MCF 10A (cell line): ENCODE measurements at regions of chr2 and their contacts with region 1.

Region 1: GRCh38 chr2:62505750-62506420 is at the start of gene TMEM17:
- DNase-seq: peak; percentile 88
- H3K4me3 Mint-ChIP-seq: peak within 1 kb of the TSS; percentile 79
- H3K27ac Mint-ChIP-seq: peak within 1 kb of the TSS; percentile 88
- H3K4me1 Mint-ChIP-seq: peaks cover 23% of the 10 kb centered on the region
- H3K27me3 Mint-ChIP-seq: no peaks in the 10 kb centered on the region
- CTCF ChIP-seq: no peak
- total RNA-seq, gene TMEM17: 2.6 and 3.1 TPM in 2 replicates

Region 2: GRCh38 chr2:62038975-62039771 is 466.7 kb before region 1 on chr2:
- CTCF ChIA-PET with region 1: no interaction called
- POLR2A ChIA-PET with region 1: no interaction called
- intact Hi-C with region 1: no loop called
- DNase-seq: peak; percentile 66
- H3K4me3 Mint-ChIP-seq: no peak overlapping the region
- H3K27ac Mint-ChIP-seq: no peak overlapping the region
- H3K4me1 Mint-ChIP-seq: peaks cover 5% of the 10 kb centered on the region
- H3K27me3 Mint-ChIP-seq: no peaks in the 10 kb centered on the region
- CTCF ChIP-seq: no peak

Region 3: GRCh38 chr2:62287899-62288880 is 217.7 kb before region 1 on chr2:
- CTCF ChIA-PET with region 1: no interaction called
- POLR2A ChIA-PET with region 1: no interaction called
- intact Hi-C with region 1: no loop called
- DNase-seq: peak; percentile 92
- H3K4me3 Mint-ChIP-seq: no peak overlapping the region
- H3K27ac Mint-ChIP-seq: no peak overlapping the region
- H3K4me1 Mint-ChIP-seq: peaks cover 17% of the 10 kb centered on the region
- H3K27me3 Mint-ChIP-seq: no peaks in the 10 kb centered on the region
- CTCF ChIP-seq: no peak

Region 4: DNA sequence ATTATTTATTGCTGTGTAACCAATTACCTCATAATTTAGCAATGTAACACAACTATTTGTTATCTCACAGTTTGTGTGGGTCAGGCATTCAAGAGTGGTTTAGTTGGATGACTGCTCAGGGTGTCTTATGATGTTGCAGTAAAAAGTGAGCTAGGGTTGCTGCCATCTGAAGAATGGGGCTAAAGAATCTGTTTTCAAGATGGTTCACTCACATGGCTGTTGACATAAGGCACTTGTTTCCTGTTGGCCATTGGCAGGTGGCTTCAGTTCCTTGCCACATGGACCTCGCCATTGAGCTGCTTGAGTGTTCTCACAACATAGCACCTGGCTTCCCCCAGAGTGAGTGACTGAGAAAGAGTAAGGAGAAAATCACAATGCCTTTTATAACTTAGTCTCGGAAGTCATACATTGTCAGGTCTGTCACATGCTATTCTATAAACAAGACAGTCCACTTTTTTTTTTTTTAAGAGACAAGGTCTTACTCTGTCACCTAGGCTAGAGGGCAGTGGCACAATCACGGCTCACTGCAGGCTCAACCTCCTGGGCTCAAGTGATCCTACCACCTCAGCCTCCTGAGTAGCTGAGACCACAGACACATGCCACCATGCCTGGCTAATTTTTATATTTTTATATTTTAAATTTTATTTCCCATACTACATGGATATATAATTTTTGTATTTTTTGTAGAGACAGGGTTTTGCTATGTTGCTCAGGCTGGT is 123.0 kb before region 1 on chr2:
- CTCF ChIA-PET with region 1: no interaction called
- POLR2A ChIA-PET with region 1: no interaction called
- intact Hi-C with region 1: no loop called
- DNase-seq: no peak
- H3K4me3 Mint-ChIP-seq: no peak overlapping the region
- H3K27ac Mint-ChIP-seq: no peak overlapping the region
- H3K4me1 Mint-ChIP-seq: no peaks in the 10 kb centered on the region
- H3K27me3 Mint-ChIP-seq: no peaks in the 10 kb centered on the region
- CTCF ChIP-seq: no peak

Region 5: DNA sequence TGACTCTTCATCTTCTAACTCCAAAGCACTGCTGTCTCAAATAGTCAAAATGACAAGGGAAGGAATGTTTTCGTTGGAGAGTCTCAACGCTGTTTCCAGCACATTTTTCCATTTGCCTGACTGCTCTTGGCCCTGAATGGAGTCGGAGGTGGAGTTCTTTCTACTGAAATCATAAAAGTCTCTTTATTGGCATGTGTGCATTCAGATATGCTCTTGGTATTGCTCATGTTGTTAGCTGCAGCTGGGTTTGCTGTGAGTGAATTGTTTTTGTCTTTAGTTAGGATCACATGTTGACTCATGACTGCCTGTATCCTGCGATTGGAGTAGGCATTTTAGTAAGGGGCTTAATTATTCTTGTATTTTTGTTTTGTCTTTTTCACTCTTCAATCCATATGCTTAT is 16.7 kb before region 1 on chr2:
- CTCF ChIA-PET with region 1: no interaction called
- POLR2A ChIA-PET with region 1: interaction called, 19 read pairs
- intact Hi-C with region 1: no loop called
- DNase-seq: no peak
- H3K4me3 Mint-ChIP-seq: no peak overlapping the region
- H3K27ac Mint-ChIP-seq: no peak overlapping the region
- H3K4me1 Mint-ChIP-seq: peaks cover 9% of the 10 kb centered on the region
- H3K27me3 Mint-ChIP-seq: no peaks in the 10 kb centered on the region
- CTCF ChIP-seq: no peak

Region 6: GRCh38 chr2:62577994-62578781 is 72.3 kb after region 1 on chr2:
- CTCF ChIA-PET with region 1: no interaction called
- POLR2A ChIA-PET with region 1: interaction called, 16 read pairs
- intact Hi-C with region 1: loop called (anchors 2 kb)
- DNase-seq: peak; percentile 94
- H3K4me3 Mint-ChIP-seq: peak overlapping the region; percentile 10
- H3K27ac Mint-ChIP-seq: peak overlapping the region; percentile 90
- H3K4me1 Mint-ChIP-seq: peaks cover 19% of the 10 kb centered on the region
- H3K27me3 Mint-ChIP-seq: no peaks in the 10 kb centered on the region
- CTCF ChIP-seq: no peak

Region 7: DNA sequence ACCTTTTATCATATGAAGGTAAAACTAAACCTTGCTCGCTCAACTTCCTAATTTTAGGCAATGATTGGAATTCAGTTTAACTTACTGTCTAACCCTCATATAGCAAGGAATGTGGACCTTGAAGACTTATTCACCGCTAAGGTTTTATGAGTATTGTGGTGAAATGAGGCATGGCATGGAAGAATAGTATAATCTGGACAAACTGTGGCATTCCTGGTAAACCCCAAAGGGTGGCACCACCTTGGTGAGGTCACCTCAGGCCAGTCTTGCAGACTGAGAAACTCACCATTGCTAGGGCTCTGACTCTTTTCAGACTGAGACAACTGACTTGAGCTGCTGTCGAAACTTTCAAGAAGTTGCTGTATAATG is 148.5 kb after region 1 on chr2:
- CTCF ChIA-PET with region 1: no interaction called
- POLR2A ChIA-PET with region 1: interaction called, 24 read pairs
- intact Hi-C with region 1: no loop called
- DNase-seq: peak; percentile 50
- H3K4me3 Mint-ChIP-seq: peak overlapping the region; percentile 22
- H3K27ac Mint-ChIP-seq: peak overlapping the region; percentile 79
- H3K4me1 Mint-ChIP-seq: peaks cover 23% of the 10 kb centered on the region
- H3K27me3 Mint-ChIP-seq: no peaks in the 10 kb centered on the region
- CTCF ChIP-seq: no peak

Region 8: GRCh38 chr2:62660582-62661262 is 154.8 kb after region 1 on chr2:
- CTCF ChIA-PET with region 1: interaction called, 3 read pairs
- POLR2A ChIA-PET with region 1: interaction called, 24 read pairs
- intact Hi-C with region 1: loop called (anchors 5 kb)
- DNase-seq: peak; percentile 87
- H3K4me3 Mint-ChIP-seq: peak overlapping the region; percentile 46
- H3K27ac Mint-ChIP-seq: peak overlapping the region; percentile 91
- H3K4me1 Mint-ChIP-seq: peaks cover 60% of the 10 kb centered on the region
- H3K27me3 Mint-ChIP-seq: no peaks in the 10 kb centered on the region
- CTCF ChIP-seq: no peak